Endothelial cell of umbilical vein (primary cell): ENCODE measurements at regions of chr11 and their contacts with region 1.

Region 1: GRCh38 chr11:92886243-92886905 is 83.1 kb upstream of the MTNR1B start:
- DNase-seq: peak; percentile 37
- H3K4me3 ChIP-seq: no peak overlapping the region
- H3K27ac ChIP-seq: no peak overlapping the region
- H3K4me1 ChIP-seq: no peaks in the 10 kb centered on the region
- H3K27me3 ChIP-seq: no peaks in the 10 kb centered on the region
- CTCF ChIP-seq: peak; percentile 15 to 24
- POLR2A ChIP-seq: no peak

Region 2: DNA sequence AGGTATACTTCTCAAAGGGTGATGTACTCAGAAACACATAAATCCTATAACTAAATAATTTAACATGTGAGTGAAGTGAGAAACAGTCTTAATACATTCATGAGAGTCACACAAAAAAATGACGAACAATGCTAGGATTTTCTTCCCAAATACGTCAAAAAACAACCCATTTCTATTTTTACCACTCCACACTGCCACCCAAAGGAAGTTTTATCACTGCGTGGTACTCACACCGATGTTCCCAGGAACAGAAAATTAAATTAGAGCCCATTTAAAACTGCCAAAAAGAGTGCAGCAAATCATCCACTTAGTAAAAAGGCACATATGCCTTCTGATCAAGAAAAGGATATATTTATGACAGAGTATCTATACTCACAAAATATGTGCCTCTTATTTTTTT is 1372.6 kb before region 1 on chr11:
- CTCF ChIA-PET with region 1: no interaction called
- POLR2A ChIA-PET with region 1: no interaction called
- dilution Hi-C with region 1: no loop called
- intact Hi-C with region 1: loop called (anchors 10 kb)
- DNase-seq: no peak
- H3K4me3 ChIP-seq: no peak overlapping the region
- H3K27ac ChIP-seq: no peak overlapping the region
- H3K4me1 ChIP-seq: no peaks in the 10 kb centered on the region
- H3K27me3 ChIP-seq: no peaks in the 10 kb centered on the region
- CTCF ChIP-seq: no peak
- POLR2A ChIP-seq: no peak

Region 3: GRCh38 chr11:92569717-92570116 is 316.7 kb before region 1 on chr11:
- CTCF ChIA-PET with region 1: no interaction called
- POLR2A ChIA-PET with region 1: no interaction called
- dilution Hi-C with region 1: no loop called
- intact Hi-C with region 1: no loop called
- DNase-seq: no peak
- H3K4me3 ChIP-seq: no peak overlapping the region
- H3K27ac ChIP-seq: no peak overlapping the region
- H3K4me1 ChIP-seq: no peaks in the 10 kb centered on the region
- H3K27me3 ChIP-seq: no peaks in the 10 kb centered on the region
- CTCF ChIP-seq: no peak
- POLR2A ChIP-seq: no peak

Region 4: DNA sequence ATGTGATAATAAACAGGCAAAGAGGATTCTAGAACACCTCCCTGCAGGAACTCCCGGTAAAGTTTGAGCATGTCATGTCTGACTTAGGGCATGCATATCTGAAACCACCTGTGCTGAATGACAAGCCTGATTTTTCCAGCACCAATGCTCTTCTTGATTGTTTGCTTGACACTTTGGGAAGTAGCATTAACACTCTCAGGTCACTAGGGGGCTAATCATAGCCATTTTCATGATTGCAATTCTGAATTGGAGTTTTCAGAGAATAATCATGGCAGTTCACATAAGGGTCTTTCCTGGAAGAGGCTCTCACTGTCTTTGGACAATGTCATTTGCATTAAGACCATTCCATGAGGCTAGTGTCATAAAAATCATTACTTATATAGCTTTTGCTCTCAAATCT is 151.3 kb before region 1 on chr11:
- CTCF ChIA-PET with region 1: no interaction called
- POLR2A ChIA-PET with region 1: no interaction called
- dilution Hi-C with region 1: no loop called
- intact Hi-C with region 1: loop called (anchors 1 kb)
- DNase-seq: no peak
- H3K4me3 ChIP-seq: no peak overlapping the region
- H3K27ac ChIP-seq: no peak overlapping the region
- H3K4me1 ChIP-seq: no peaks in the 10 kb centered on the region
- H3K27me3 ChIP-seq: no peaks in the 10 kb centered on the region
- CTCF ChIP-seq: no peak
- POLR2A ChIP-seq: no peak